ENCODE measurements at regions of chr17 and their contacts with region 1.

Region 1: DNA sequence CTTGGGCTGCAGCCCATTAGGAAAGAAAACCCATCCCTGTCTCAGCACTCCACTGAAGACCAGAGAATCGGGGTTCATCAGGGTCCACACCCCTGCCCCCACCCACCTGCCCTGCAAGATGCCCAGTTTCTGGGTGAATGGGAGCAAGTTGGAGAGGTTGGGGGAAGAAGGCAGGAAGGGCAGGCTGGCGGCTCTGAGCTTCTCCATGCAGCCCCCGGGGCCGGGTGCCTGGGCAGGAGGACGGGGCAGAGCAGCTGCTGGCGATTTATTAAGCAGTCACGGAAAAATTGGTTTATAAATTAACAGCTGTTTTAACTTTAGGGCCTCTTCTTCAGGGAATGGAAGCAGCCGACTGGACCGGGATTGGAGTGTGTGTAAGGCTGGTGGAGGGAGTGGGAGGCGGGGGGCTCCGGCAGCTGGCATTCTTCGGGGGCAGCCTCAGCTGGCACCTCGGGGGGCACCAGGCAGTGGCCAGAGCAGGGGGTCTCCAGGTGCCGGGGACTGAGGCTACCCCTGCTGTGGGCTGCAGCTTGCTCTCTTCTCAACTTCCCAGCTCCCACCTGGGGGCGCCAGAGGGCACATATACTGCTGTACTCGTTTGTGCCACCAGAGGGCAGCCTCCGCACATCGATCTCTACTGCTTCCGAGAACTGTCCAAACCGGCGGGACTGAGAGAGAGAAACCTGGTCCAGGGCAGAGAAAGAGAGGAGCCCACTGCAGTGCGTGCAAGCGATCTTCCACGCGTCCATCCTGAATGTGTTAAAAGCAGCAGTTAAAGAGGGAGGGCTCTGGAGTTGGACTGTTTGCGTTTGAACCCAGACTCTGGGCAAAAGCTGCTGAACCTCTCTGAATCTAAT is 5.0 kb upstream of the PPP1R1B start:
- DNase-seq: peak; percentile 51 to 98 (median 83)
- ATAC-seq: peak; percentile 64 to 83 (median 70)
- H3K4me3 ChIP-seq: peak overlapping the region; percentile 17 to 18
- H3K4me3 Mint-ChIP-seq: peak overlapping the region; percentile 51 to 69 (median 62)
- H3K27ac ChIP-seq: peak overlapping the region; percentile 38
- H3K27ac Mint-ChIP-seq: peak overlapping the region; percentile 71 to 76
- H3K4me1 ChIP-seq: peaks cover 13 to 49% of the 10 kb centered on the region in 2 experiments
- H3K4me1 Mint-ChIP-seq: peaks cover 25 to 31% (median 30%) of the 10 kb centered on the region in 3 donors
- H3K27me3 ChIP-seq: peaks cover 0 to 48% of the 10 kb centered on the region in 2 experiments
- H3K27me3 Mint-ChIP-seq: peaks cover 17 to 20% of the 10 kb centered on the region in 2 donors

Region 2: GRCh38 chr17:39636927-39637736 is 15.4 kb after region 1 on chr17 and contains the start of gene STARD3:
- CTCF ChIA-PET with region 1: interaction called, 4 to 40 read pairs
- POLR2A ChIA-PET with region 1: no interaction called
- DNase-seq: peak; percentile 77 to 94 (median 87)
- ATAC-seq: peak; percentile 90 to 92 (median 90)
- H3K4me3 ChIP-seq: peak within 1 kb of the TSS; percentile 71 to 87
- H3K4me3 Mint-ChIP-seq: peak within 1 kb of the TSS; percentile 91 to 94 (median 92)
- H3K27ac ChIP-seq: peak within 1 kb of the TSS; percentile 95
- H3K27ac Mint-ChIP-seq: peak within 1 kb of the TSS; percentile 88 to 94
- H3K4me1 ChIP-seq: peaks cover 36 to 65% of the 10 kb centered on the region in 2 experiments
- H3K4me1 Mint-ChIP-seq: peaks cover 59 to 64% (median 61%) of the 10 kb centered on the region in 3 donors
- H3K27me3 ChIP-seq: peaks cover 0 to 13% of the 10 kb centered on the region in 2 experiments
- H3K27me3 Mint-ChIP-seq: peaks cover 0 to under 1% of the 10 kb centered on the region in 2 donors
- total RNA-seq, gene STARD3: 81.3 to 146 (median 99.7) TPM

Region 3: GRCh38 chr17:39653662-39654331 is 32.0 kb after region 1 on chr17:
- CTCF ChIA-PET with region 1: interaction called, 10 to 27 read pairs
- POLR2A ChIA-PET with region 1: interaction called in 1 of 2 experiments, 13 read pairs
- DNase-seq: peak; percentile 40 to 85 (median 75)
- ATAC-seq: peak; percentile 61 to 74 (median 66)
- H3K4me3 ChIP-seq: no peak overlapping the region
- H3K4me3 Mint-ChIP-seq: no peak overlapping the region
- H3K27ac ChIP-seq: no peak overlapping the region
- H3K27ac Mint-ChIP-seq: peak overlapping the region in 1 of 2 donors; percentile 34
- H3K4me1 ChIP-seq: peaks cover 5 to 45% of the 10 kb centered on the region in 2 experiments
- H3K4me1 Mint-ChIP-seq: peaks cover 53 to 67% (median 61%) of the 10 kb centered on the region in 3 donors
- H3K27me3 ChIP-seq: no peaks in the 10 kb centered on the region
- H3K27me3 Mint-ChIP-seq: no peaks in the 10 kb centered on the region

Region 4: GRCh38 chr17:39754161-39754951 is 132.6 kb after region 1 on chr17:
- CTCF ChIA-PET with region 1: interaction called in 1 of 2 experiments, 14 read pairs
- POLR2A ChIA-PET with region 1: no interaction called
- DNase-seq: peak; percentile 94 to 99 (median 97)
- ATAC-seq: peak; percentile 81 to 83 (median 82)
- H3K4me3 ChIP-seq: peak overlapping the region; percentile 45 to 75
- H3K4me3 Mint-ChIP-seq: peak overlapping the region; percentile 69 to 81 (median 73)
- H3K27ac ChIP-seq: peak overlapping the region; percentile 98
- H3K27ac Mint-ChIP-seq: peak overlapping the region; percentile 98 to 99
- H3K4me1 ChIP-seq: peaks cover 33 to 69% of the 10 kb centered on the region in 2 experiments
- H3K4me1 Mint-ChIP-seq: peaks cover 55 to 62% (median 57%) of the 10 kb centered on the region in 3 donors
- H3K27me3 ChIP-seq: peaks cover 0 to 5% of the 10 kb centered on the region in 2 experiments
- H3K27me3 Mint-ChIP-seq: no peaks in the 10 kb centered on the region

Region 5: DNA sequence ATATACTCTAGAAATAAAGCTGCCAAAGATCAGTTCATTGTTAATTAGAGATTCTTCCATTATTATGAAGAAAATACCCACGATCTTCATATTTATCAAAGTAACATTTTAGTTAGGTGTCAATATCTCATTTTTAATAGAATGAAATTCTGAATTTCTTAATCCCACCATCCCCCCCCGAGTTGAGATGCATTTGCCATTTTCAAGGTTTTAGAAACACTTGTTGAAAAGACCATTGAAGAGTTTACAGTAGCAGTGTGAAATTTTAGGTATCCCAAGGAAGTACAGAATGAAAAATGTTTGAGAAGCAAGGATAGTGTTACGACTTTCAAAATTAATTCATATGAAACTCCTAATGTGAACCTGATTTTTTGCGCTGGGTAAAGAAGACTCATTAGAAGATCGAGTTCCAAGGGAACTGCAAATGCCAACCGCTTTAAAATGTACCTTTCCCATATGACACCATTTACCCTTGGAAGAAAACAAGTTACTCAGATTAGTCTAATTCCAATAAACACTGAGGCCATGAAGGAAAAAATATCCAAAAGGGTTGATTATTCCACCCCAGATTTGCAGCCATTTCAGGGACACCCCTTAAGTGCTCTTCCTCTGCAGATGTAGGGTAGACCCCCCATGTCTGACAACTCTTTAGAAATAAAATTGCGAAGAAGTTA is 241.6 kb after region 1 on chr17:
- CTCF ChIA-PET with region 1: interaction called in 1 of 2 experiments, 16 read pairs
- POLR2A ChIA-PET with region 1: interaction called in 1 of 2 experiments, 3 read pairs
- DNase-seq: no peak
- ATAC-seq: peak in 3 of 4 experiments; percentile 22 to 33 (median 32)
- H3K4me3 ChIP-seq: peak overlapping the region; percentile 80 to 84
- H3K4me3 Mint-ChIP-seq: peak overlapping the region; percentile 89 to 97 (median 97)
- H3K27ac ChIP-seq: peak overlapping the region; percentile 96
- H3K27ac Mint-ChIP-seq: peak overlapping the region; percentile 92 to 96
- H3K4me1 ChIP-seq: peaks cover 31 to 40% of the 10 kb centered on the region in 2 experiments
- H3K4me1 Mint-ChIP-seq: peaks cover 66 to 75% (median 75%) of the 10 kb centered on the region in 3 donors
- H3K27me3 ChIP-seq: no peaks in the 10 kb centered on the region
- H3K27me3 Mint-ChIP-seq: no peaks in the 10 kb centered on the region

Region 6: DNA sequence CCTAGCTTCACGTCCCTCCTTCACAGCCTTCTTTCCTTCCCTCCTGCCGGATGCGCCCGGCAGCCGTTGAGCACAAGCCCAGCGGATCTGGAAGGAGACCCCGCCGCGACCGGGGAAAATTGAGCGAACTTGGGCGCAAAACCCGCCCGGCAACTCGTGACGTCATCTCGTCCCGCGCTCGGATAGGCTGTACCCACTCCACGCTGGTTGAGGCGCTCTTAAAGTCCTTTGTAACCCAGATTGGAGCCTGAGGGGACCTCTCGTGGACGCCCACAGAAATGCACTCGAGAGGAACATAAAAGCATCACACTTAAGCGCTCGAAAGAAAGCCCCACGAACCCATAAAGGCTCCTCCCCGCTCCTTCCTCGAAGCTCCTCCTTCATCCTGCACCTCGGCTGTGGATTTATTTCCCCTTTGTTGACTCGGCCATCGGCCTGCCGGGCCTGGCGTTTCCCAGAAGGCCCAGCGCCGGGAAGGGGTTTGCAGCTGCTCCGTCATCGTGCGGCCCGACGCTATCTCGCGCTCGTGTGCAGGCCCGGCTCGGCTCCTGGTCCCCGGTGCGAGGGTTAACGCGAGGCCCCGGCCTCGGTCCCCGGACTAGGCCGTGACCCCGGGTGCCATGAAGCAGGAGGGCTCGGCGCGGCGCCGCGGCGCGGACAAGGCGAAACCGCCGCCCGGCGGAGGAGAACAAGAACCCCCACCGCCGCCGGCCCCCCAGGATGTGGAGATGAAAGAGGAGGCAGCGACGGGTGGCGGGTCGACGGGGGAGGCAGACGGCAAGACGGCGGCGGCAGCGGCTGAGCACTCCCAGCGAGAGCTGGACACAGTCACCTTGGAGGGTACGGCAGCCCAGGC is 358.8 kb after region 1 on chr17 and contains the start of gene PSMD3:
- CTCF ChIA-PET with region 1: interaction called in 1 of 2 experiments, 10 read pairs
- POLR2A ChIA-PET with region 1: interaction called in 1 of 2 experiments, 4 read pairs
- DNase-seq: peak; percentile 94 to 100 (median 98)
- ATAC-seq: peak; percentile 93 to 94 (median 94)
- H3K4me3 ChIP-seq: peak within 1 kb of the TSS; percentile 85 to 96
- H3K4me3 Mint-ChIP-seq: peak within 1 kb of the TSS; percentile 88 to 93 (median 91)
- H3K27ac ChIP-seq: peak within 1 kb of the TSS; percentile 94
- H3K27ac Mint-ChIP-seq: peak within 1 kb of the TSS; percentile 93 to 97
- H3K4me1 ChIP-seq: peaks cover 13 to 20% of the 10 kb centered on the region in 2 experiments
- H3K4me1 Mint-ChIP-seq: peaks cover 39 to 44% (median 43%) of the 10 kb centered on the region in 3 donors
- H3K27me3 ChIP-seq: peaks cover 0 to 7% of the 10 kb centered on the region in 2 experiments
- H3K27me3 Mint-ChIP-seq: no peaks in the 10 kb centered on the region
- total RNA-seq, gene PSMD3: 60.8 to 69.0 (median 63.5) TPM

Measured in T-cell (primary cell).